CD4-positive, alpha-beta T cell (primary cell): ENCODE measurements at regions of chr1 and their contacts with region 1.

Region 1: DNA sequence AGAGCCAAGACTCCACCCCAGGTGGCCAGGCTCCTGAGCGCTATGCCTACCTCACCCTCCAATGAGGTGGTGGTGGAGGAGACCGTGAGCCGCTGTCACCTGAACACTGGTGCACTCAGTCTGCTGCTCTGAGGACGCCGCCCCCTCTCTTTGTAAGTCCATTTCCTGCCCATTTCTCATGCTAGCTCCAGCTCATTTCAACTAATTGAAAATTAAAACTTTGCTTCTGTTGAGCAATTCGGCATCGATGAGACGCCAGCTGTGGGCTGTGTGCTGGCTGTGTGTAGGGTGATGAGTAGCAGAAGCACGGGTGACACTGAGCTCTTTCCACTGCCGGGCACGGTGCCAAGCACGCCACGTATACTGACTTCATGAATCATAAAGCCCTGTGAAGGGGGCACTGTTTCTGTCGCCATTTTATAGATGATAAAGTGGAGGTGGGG is 11.2 kb downstream of the TNFRSF1B start:
- DNase-seq: peak; percentile 77 to 99 (median 94)
- ATAC-seq: peak; percentile 70
- H3K4me3 ChIP-seq: peak overlapping the region; percentile 41
- H3K4me3 Mint-ChIP-seq: peak overlapping the region; percentile 69
- H3K27ac ChIP-seq: peak overlapping the region; percentile 83 to 85
- H3K27ac Mint-ChIP-seq: peak overlapping the region; percentile 96
- H3K4me1 ChIP-seq: peaks cover 100% of the 10 kb centered on the region
- H3K4me1 Mint-ChIP-seq: peaks cover 77% of the 10 kb centered on the region
- H3K27me3 ChIP-seq: no peaks in the 10 kb centered on the region
- H3K27me3 Mint-ChIP-seq: no peaks in the 10 kb centered on the region
- CTCF ChIP-seq: no peak

Region 2: GRCh38 chr1:12132092-12132491 is 45.9 kb before region 1 on chr1:
- CTCF ChIA-PET with region 1: interaction called, 3 read pairs
- POLR2A ChIA-PET with region 1: interaction called, 8 read pairs
- intact Hi-C with region 1: loop called in 1 of 2 experiments (anchors 1 kb)
- DNase-seq: peak in 1 of 14 experiments; percentile 41
- ATAC-seq: no peak
- H3K4me3 ChIP-seq: no peak overlapping the region
- H3K4me3 Mint-ChIP-seq: peak overlapping the region; percentile 38
- H3K27ac ChIP-seq: peak overlapping the region; percentile 50 to 81
- H3K27ac Mint-ChIP-seq: peak overlapping the region; percentile 84
- H3K4me1 ChIP-seq: peaks cover 62% of the 10 kb centered on the region
- H3K4me1 Mint-ChIP-seq: peaks cover 32% of the 10 kb centered on the region
- H3K27me3 ChIP-seq: no peaks in the 10 kb centered on the region
- H3K27me3 Mint-ChIP-seq: no peaks in the 10 kb centered on the region
- CTCF ChIP-seq: no peak

Region 3: DNA sequence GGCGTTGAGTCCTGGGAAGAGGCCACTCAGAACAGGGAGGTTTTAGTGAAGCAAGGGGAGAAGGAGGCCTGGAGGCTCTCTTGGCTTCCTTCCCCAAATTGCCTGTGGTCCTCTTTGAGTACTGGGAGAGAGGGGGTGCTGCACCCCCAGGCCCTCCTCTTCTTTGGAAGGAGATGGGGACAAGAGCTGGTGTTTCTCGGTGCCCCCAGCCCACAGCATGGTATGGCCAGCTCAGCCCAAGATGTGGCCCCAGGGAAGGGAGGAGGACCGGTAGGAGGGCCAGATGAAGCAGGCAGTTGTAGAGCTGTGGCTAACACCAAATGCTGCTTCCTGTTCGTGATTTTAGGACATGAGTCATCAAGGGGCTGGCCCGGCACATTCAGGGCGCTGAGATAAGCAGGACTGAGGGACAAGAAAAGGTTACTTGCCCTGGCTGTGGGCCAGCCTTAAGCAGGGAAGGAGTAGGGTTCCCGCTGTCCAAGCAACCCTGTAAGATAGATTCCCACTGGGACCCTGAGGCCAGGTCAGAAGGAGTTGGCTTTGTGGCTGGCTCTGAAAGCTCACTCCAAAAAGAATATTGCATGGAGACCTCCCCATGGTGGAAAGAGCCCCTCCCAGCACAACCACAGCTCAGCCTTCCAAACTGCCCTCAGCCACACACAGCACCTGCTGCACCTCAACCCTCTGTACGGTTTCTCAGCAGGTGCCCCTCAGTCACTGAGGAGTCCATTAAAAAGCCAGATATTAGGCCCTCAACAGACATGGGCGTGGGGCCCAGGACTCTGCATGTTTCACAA is 16.2 kb before region 1 on chr1:
- CTCF ChIA-PET with region 1: interaction called, 8 read pairs
- POLR2A ChIA-PET with region 1: interaction called, 44 read pairs
- intact Hi-C with region 1: loop called in 1 of 2 experiments (anchors 1 kb)
- DNase-seq: peak; percentile 43 to 93 (median 64)
- ATAC-seq: peak; percentile 75
- H3K4me3 ChIP-seq: no peak overlapping the region
- H3K4me3 Mint-ChIP-seq: peak overlapping the region; percentile 59
- H3K27ac ChIP-seq: peak overlapping the region; percentile 47 to 73
- H3K27ac Mint-ChIP-seq: peak overlapping the region; percentile 83
- H3K4me1 ChIP-seq: peaks cover 94% of the 10 kb centered on the region
- H3K4me1 Mint-ChIP-seq: peaks cover 69% of the 10 kb centered on the region
- H3K27me3 ChIP-seq: no peaks in the 10 kb centered on the region
- H3K27me3 Mint-ChIP-seq: no peaks in the 10 kb centered on the region
- CTCF ChIP-seq: no peak

Region 4: DNA sequence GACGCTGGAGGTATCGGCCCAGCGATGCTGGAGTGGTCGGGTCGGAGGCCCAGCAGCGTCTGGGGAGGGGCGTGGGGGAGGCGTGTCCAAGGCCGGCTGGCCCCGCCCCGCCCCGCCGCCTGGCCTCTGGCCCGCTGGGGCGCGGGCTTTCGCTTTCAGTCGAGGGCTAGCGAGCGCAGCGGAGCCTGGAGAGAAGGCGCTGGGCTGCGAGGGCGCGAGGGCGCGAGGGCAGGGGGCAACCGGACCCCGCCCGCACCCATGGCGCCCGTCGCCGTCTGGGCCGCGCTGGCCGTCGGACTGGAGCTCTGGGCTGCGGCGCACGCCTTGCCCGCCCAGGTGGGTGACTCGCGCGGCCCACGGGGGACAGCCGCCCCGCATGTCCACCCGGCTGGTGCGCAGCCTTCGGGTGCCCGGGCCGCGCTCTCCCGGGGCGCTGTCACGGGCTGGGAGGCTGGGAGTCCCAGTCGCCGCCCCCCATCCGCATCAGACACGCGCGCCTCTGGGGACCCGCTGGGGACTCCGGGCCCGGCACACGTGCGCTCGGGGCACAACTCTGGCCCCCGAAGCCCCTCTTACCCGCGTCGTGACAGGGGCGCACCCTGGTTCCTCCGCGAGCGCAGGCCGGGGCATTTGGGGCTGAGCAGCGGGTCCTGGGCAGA is 11.1 kb before region 1 on chr1 and contains the start of gene TNFRSF1B:
- CTCF ChIA-PET with region 1: interaction called, 13 read pairs
- POLR2A ChIA-PET with region 1: interaction called, 44 read pairs
- intact Hi-C with region 1: no loop called
- DNase-seq: peak in 13 of 14 experiments; percentile 37 to 85 (median 60)
- ATAC-seq: peak; percentile 50
- H3K4me3 ChIP-seq: peak within 1 kb of the TSS; percentile 94
- H3K4me3 Mint-ChIP-seq: peak within 1 kb of the TSS; percentile 99
- H3K27ac ChIP-seq: peak within 1 kb of the TSS; percentile 82 to 83
- H3K27ac Mint-ChIP-seq: peak within 1 kb of the TSS; percentile 96
- H3K4me1 ChIP-seq: peaks cover 91% of the 10 kb centered on the region
- H3K4me1 Mint-ChIP-seq: peaks cover 66% of the 10 kb centered on the region
- H3K27me3 ChIP-seq: no peaks in the 10 kb centered on the region
- H3K27me3 Mint-ChIP-seq: no peaks in the 10 kb centered on the region
- CTCF ChIP-seq: no peak
- total RNA-seq, gene TNFRSF1B: 61.9 to 62.6 TPM

Region 5: GRCh38 chr1:12376106-12377045 is 198.4 kb after region 1 on chr1:
- CTCF ChIA-PET with region 1: no interaction called
- POLR2A ChIA-PET with region 1: no interaction called
- intact Hi-C with region 1: no loop called
- DNase-seq: peak in 2 of 14 experiments; percentile 13 to 23
- ATAC-seq: no peak
- H3K4me3 ChIP-seq: no peak overlapping the region
- H3K4me3 Mint-ChIP-seq: no peak overlapping the region
- H3K27ac ChIP-seq: no peak overlapping the region
- H3K27ac Mint-ChIP-seq: no peak overlapping the region
- H3K4me1 ChIP-seq: no peaks in the 10 kb centered on the region
- H3K4me1 Mint-ChIP-seq: peaks cover 7% of the 10 kb centered on the region
- H3K27me3 ChIP-seq: no peaks in the 10 kb centered on the region
- H3K27me3 Mint-ChIP-seq: no peaks in the 10 kb centered on the region
- CTCF ChIP-seq: no peak